H1 (cell line): ENCODE measurements at regions of chr3 and their contacts with region 1.

Region 1: DNA sequence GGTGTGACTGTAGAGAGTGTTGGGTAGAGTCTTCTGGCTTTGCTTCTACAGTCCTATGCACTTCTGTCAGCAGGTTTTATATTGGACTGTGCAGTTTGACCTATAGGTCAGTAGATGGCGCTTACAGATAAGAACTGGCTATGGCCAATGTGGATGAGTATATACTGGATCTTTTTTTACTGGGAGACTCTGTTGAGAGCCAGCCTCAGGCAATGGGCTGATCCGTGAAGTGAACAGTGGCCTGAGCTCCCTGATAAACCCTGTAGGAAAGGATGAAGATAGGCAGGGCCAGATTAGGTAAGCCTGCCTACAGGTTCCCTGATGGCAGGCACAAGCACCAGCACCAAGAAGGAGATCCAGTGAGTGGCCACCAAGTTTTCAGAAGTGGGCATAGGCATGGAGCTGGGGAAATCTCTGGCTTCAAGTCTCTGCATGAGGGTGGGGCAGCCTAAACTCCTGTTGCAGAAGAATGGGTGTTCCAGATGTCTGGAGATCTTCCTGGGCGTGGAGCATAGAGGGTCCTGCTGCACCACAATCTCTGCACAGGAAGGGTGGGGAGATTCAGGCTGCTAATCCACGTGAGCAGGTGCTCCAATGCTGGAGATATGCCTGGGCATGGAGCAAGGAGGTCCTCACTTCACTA is 326.0 kb upstream of the SGO1 start:
- DNase-seq: peak; percentile 15 to 49
- H3K4me3 ChIP-seq: no peak overlapping the region
- H3K27ac ChIP-seq: no peak overlapping the region
- H3K4me1 ChIP-seq: no peaks in the 10 kb centered on the region
- H3K27me3 ChIP-seq: no peaks in the 10 kb centered on the region
- CTCF ChIP-seq: peak in 2 of 3 experiments; percentile 80 to 81; a peak in 3 of 4 replicates
- EP300 ChIP-seq: no peak; a peak in 1 of 3 replicates
- POLR2A ChIP-seq: no peak
- RAD21 ChIP-seq: peak; percentile 96 to 97

Region 2: GRCh38 chr3:20417388-20418108 is 94.4 kb before region 1 on chr3:
- CTCF ChIA-PET with region 1: no interaction called
- POLR2A ChIA-PET with region 1: no interaction called
- DNase-seq: no peak
- H3K4me3 ChIP-seq: no peak overlapping the region
- H3K27ac ChIP-seq: no peak overlapping the region
- H3K4me1 ChIP-seq: no peaks in the 10 kb centered on the region
- H3K27me3 ChIP-seq: no peaks in the 10 kb centered on the region
- CTCF ChIP-seq: no peak
- EP300 ChIP-seq: no peak
- POLR2A ChIP-seq: no peak
- RAD21 ChIP-seq: no peak

Region 3: DNA sequence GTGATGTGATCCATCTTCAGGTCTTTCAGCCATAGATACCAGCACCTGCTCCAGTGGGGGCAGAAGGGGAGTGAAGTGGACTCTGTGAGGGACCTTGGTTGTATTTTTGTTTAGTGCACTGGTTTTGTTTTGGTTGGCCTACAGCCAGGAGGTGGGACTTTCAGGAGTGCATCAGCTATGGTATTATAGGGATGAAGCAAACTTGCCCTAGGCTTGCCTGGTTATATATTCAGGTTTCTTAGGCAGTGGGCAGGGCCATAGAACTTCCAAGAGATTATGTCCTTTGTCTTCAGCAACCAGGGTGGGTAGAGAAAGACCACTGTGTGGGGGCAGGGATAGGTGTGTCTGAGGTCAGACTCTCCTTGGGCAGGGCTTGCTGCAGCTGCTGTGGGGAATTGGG is 11.3 kb after region 1 on chr3:
- CTCF ChIA-PET with region 1: interaction called, 11 read pairs
- POLR2A ChIA-PET with region 1: no interaction called
- DNase-seq: no peak
- H3K4me3 ChIP-seq: no peak overlapping the region
- H3K27ac ChIP-seq: no peak overlapping the region
- H3K4me1 ChIP-seq: no peaks in the 10 kb centered on the region
- H3K27me3 ChIP-seq: no peaks in the 10 kb centered on the region
- CTCF ChIP-seq: no peak
- EP300 ChIP-seq: no peak
- POLR2A ChIP-seq: no peak
- RAD21 ChIP-seq: no peak

Region 4: DNA sequence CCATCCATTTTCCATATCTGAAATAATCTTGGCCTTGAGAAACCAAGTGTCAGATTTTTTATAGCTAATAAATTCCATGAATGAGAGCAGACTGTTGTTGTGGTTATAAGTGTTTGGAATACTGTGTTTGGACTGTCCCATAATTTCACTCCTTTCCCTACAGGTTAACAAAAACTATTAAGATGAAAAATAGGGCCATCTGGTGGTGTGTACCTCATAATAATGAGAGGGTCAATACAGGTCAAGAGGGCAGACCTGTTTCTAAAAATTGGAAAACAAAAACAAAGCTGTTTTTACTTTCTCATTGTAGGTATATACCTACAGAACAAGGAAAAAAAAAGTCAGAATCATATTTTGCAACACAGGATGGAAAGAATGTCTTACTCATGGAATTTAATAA is 227.8 kb after region 1 on chr3:
- CTCF ChIA-PET with region 1: interaction called, 10 read pairs
- POLR2A ChIA-PET with region 1: no interaction called
- DNase-seq: no peak
- H3K4me3 ChIP-seq: no peak overlapping the region
- H3K27ac ChIP-seq: no peak overlapping the region
- H3K4me1 ChIP-seq: peaks cover 0 to 7% (median 1%) of the 10 kb centered on the region in 4 experiments; a peak in 4 of 7 replicates
- H3K27me3 ChIP-seq: no peaks in the 10 kb centered on the region
- CTCF ChIP-seq: no peak
- EP300 ChIP-seq: no peak
- POLR2A ChIP-seq: no peak
- RAD21 ChIP-seq: no peak

Region 5: DNA sequence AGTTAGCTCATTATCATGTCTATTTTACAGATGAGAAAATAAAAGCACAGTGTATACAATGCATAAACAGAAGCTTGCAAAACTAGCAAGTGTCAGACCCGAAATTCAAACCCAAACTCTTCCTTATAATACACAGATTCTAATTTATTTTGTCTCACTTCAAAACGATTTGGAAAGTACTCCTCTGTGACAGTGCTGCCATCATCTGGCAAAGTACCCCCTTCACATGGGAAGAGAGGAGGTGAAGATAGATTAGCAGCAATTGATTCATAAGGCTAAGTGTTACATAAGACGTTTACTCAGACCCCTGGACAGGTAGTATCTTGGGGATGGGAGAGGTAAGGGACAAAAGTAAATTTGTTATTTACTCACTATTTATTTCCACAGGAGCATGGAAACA is 418.1 kb after region 1 on chr3:
- CTCF ChIA-PET with region 1: interaction called, 52 read pairs
- POLR2A ChIA-PET with region 1: interaction called, 3 read pairs
- DNase-seq: no peak
- H3K4me3 ChIP-seq: no peak overlapping the region
- H3K27ac ChIP-seq: no peak overlapping the region
- H3K4me1 ChIP-seq: no peaks in the 10 kb centered on the region
- H3K27me3 ChIP-seq: peaks cover 0 to 1% (median 0%) of the 10 kb centered on the region in 4 experiments; a peak in 1 of 7 replicates
- CTCF ChIP-seq: peak in 2 of 3 experiments; percentile 57 to 67; a peak in 3 of 4 replicates
- EP300 ChIP-seq: no peak
- POLR2A ChIP-seq: no peak
- RAD21 ChIP-seq: peak; percentile 87 to 88

Region 6: GRCh38 chr3:21894459-21895340 is 1382.7 kb after region 1 on chr3:
- CTCF ChIA-PET with region 1: interaction called, 11 read pairs
- POLR2A ChIA-PET with region 1: no interaction called
- DNase-seq: no peak
- H3K4me3 ChIP-seq: no peak overlapping the region
- H3K27ac ChIP-seq: no peak overlapping the region
- H3K4me1 ChIP-seq: no peaks in the 10 kb centered on the region; a peak in 1 of 7 replicates
- H3K27me3 ChIP-seq: no peaks in the 10 kb centered on the region
- CTCF ChIP-seq: peak in 2 of 3 experiments; percentile 18 to 40; a peak in 2 of 4 replicates
- EP300 ChIP-seq: no peak
- POLR2A ChIP-seq: no peak
- RAD21 ChIP-seq: peak; percentile 60 to 78